T-cell (primary cell): ENCODE measurements at regions of chr6 and their contacts with region 1.

Region 1: DNA sequence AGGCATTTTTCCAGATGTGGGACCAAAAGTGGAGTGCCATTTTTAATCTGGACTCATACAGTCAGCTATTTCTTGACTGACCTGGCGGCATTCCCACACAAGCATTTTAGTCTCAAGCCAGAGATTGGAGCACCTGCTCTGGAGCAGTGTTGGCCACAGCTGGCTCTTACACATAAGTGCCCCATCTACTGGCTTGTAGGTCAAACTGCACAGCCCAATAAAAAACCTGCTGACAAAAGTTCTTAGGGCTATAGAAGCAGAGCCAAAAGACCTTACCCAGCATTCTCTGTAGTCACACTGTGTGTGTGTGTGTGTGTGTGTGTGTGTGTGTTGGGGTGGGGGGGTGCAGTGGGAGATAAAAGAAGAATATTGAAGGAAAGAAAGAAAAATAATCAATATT is 38.6 kb upstream of the SENP6 start:
- DNase-seq: peak in 1 of 35 experiments; percentile 21
- ATAC-seq: peak; percentile 43 to 60 (median 54)
- H3K4me3 ChIP-seq: no peak overlapping the region
- H3K4me3 Mint-ChIP-seq: no peak overlapping the region
- H3K27ac ChIP-seq: no peak overlapping the region
- H3K27ac Mint-ChIP-seq: no peak overlapping the region
- H3K4me1 ChIP-seq: no peaks in the 10 kb centered on the region
- H3K4me1 Mint-ChIP-seq: peaks cover 0 to 6% (median 0%) of the 10 kb centered on the region in 3 donors
- H3K27me3 ChIP-seq: peaks cover 0 to 9% of the 10 kb centered on the region in 2 experiments
- H3K27me3 Mint-ChIP-seq: peaks cover 32 to 35% of the 10 kb centered on the region in 2 donors

Region 2: GRCh38 chr6:75261299-75261698 is 301.7 kb before region 1 on chr6:
- CTCF ChIA-PET with region 1: no interaction called
- POLR2A ChIA-PET with region 1: no interaction called
- DNase-seq: no peak
- ATAC-seq: no peak
- H3K4me3 ChIP-seq: no peak overlapping the region
- H3K4me3 Mint-ChIP-seq: no peak overlapping the region
- H3K27ac ChIP-seq: no peak overlapping the region
- H3K27ac Mint-ChIP-seq: no peak overlapping the region
- H3K4me1 ChIP-seq: no peaks in the 10 kb centered on the region
- H3K4me1 Mint-ChIP-seq: peaks cover 0 to 3% (median 0%) of the 10 kb centered on the region in 3 donors
- H3K27me3 ChIP-seq: no peaks in the 10 kb centered on the region
- H3K27me3 Mint-ChIP-seq: no peaks in the 10 kb centered on the region

Region 3: DNA sequence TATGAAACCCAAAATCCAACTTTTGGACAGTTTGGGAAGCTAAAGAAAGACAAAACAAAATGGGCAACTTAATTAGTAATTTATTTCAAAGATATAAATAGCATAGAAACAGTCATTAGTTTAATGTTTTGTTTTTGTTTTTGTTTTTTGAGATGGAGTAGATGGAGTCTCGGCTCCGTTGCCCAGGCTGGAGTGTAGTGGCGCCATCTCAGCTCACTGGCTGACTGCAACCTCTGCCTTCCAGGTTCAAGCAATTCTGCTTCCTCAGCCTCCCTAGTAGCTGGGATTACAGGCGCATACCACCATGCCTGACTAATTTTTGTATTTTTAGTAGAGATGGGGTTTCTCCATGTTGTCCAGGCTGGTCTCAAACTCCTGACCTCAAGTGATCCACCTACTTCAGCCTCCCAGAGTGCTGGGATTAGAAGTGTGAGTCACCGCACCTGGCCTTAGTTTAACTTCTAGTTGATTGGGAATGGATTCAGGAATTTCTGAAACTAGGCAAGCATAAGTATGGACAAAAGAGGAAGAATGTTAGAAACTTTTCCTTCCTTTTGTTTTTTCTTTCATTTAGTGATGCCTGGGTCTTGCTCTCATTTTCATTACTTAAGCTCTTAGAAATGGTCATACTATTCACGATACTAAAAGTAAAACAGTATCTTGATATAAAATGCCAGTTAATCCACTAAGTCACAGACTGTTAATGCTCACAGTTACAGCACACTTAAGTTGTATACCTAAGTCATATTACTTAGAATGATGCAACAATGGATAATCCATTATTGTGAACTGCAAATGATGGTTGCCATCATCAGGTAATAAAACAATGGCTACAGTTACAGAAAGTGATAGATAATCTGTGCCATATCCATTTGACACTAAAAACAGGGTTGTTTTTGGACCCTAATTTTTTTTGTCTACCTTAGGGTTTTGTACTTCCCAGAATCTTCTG is 46.9 kb after region 1 on chr6:
- CTCF ChIA-PET with region 1: interaction called in 1 of 2 experiments, 10 read pairs
- POLR2A ChIA-PET with region 1: no interaction called
- DNase-seq: no peak
- ATAC-seq: no peak
- H3K4me3 ChIP-seq: no peak overlapping the region
- H3K4me3 Mint-ChIP-seq: peak overlapping the region in 1 of 3 donors; percentile 58
- H3K27ac ChIP-seq: no peak overlapping the region
- H3K27ac Mint-ChIP-seq: peak overlapping the region; percentile 44 to 68
- H3K4me1 ChIP-seq: peaks cover 19 to 24% of the 10 kb centered on the region in 2 experiments
- H3K4me1 Mint-ChIP-seq: peaks cover 94 to 97% (median 96%) of the 10 kb centered on the region in 3 donors
- H3K27me3 ChIP-seq: no peaks in the 10 kb centered on the region
- H3K27me3 Mint-ChIP-seq: no peaks in the 10 kb centered on the region